CD8-positive, alpha-beta T cell (primary cell): ENCODE measurements at regions of chr2 and their contacts with region 1.

Region 1: DNA sequence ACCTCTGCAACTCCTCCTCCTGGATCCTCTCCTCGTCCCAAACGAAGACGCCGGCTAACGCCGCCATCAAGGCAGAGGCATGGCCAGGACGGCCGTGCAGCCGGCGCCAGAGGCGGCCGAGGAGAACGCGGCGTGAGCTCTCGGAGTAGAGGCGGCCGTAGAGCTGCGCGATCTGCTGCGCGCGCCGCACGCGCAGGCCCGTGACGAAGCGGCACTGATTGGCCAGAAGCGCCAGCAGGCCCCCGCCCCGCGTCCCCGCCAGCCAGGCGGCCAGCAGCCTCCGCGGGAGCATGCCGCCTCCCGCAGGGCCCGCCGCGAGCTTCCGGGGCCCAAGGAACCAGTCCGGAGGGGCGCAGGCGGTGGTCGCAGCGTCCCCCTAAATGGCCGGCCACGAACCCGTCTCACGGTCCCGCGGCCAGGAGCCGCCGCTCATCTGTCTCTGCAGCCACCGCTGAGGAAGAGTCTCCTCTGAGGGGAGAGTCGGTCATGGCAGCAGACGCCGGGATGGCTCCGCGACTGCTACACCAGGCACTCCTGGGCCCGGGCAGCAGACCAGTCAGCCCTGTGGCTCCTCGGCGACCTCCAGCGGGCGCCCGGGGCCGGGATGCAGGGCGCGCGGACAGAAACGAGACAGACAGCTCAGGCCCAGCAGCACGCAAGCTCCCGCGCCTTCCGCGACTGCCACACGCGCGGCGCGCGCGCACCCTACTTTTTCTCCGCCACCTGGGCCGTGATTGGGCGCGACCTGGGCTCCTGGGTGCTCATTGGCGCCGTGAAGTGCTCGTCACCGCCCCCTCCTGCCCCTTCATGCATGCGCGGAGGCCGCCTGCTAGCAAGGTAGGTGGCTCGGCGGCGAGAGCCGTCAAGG is at the start of gene STARD7:
- DNase-seq: peak; percentile 89 to 98 (median 96)
- ATAC-seq: peak; percentile 85
- H3K4me3 ChIP-seq: peak within 1 kb of the TSS; percentile 91
- H3K4me3 Mint-ChIP-seq: peak within 1 kb of the TSS; percentile 100
- H3K27ac ChIP-seq: peak within 1 kb of the TSS; percentile 75
- H3K27ac Mint-ChIP-seq: peak within 1 kb of the TSS; percentile 99
- H3K4me1 ChIP-seq: peaks cover 52% of the 10 kb centered on the region
- H3K4me1 Mint-ChIP-seq: peaks cover 54% of the 10 kb centered on the region
- H3K27me3 ChIP-seq: no peaks in the 10 kb centered on the region
- H3K27me3 Mint-ChIP-seq: no peaks in the 10 kb centered on the region
- CTCF ChIP-seq: no peak
- total RNA-seq, gene STARD7: 75.3 to 85.1 TPM

Region 2: DNA sequence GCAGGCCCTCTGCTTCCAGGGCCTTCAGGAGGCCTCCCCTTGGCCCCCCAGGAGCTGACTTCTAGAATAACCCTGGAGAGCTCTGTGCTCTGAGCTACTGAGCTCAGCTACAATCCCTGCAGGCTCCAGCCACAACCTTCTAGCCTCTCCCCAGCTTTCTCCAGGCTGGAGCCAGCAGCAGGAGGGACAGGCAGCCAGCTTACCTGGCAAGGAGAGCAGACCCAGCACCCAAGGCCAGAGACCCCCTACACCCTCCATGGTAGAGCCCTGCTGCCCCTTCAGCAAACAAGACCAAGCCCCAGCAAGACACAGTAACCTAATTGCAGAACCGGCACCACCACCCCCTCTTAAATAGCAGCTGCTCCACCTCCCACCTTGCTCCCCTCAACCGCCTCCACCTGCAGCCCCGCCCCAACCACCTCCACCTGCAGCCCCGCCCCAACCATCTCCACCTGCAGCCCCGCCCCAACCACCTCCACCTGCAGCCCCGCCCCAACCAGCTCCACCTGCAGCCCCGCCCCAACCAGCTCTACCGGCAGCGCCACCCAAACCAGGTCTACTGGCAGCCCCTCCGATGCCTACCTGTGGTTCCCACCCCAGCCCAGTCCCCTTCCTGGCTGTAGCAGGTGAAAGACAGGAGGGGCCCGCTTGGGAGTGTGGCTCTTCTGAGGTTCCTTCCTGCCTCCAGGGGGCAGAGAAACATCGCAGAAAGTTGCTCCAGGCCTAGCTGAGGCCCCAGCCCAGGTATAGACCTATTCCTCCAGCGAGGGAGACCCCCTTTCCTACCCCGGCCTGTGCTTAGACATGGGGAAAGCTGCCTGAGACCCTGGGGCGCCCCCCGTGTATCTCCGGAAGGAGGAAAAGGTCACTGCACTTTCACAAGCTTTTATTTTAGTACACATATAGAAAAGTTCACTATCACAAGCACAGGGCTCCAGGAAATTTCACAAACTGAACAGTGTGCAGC is 69.9 kb before region 1 on chr2 and contains the start of gene ASTL:
- CTCF ChIA-PET with region 1: interaction called, 11 read pairs
- POLR2A ChIA-PET with region 1: interaction called, 7 read pairs
- intact Hi-C with region 1: no loop called
- DNase-seq: peak; percentile 50 to 86 (median 73)
- ATAC-seq: peak; percentile 30
- H3K4me3 ChIP-seq: no peak within 1 kb of the TSS
- H3K4me3 Mint-ChIP-seq: no peak within 1 kb of the TSS
- H3K27ac ChIP-seq: peak within 1 kb of the TSS in 1 of 2 experiments; percentile 59
- H3K27ac Mint-ChIP-seq: peak within 1 kb of the TSS; percentile 63
- H3K4me1 ChIP-seq: peaks cover 23% of the 10 kb centered on the region
- H3K4me1 Mint-ChIP-seq: peaks cover 31% of the 10 kb centered on the region
- H3K27me3 ChIP-seq: no peaks in the 10 kb centered on the region
- H3K27me3 Mint-ChIP-seq: no peaks in the 10 kb centered on the region
- CTCF ChIP-seq: peak; percentile 52
- total RNA-seq, gene ASTL: 16.6 to 17.5 TPM

Region 3: GRCh38 chr2:96164459-96165184 is 43.8 kb before region 1 on chr2:
- CTCF ChIA-PET with region 1: no interaction called
- POLR2A ChIA-PET with region 1: interaction called, 3 read pairs
- intact Hi-C with region 1: loop called in 1 of 2 experiments (anchors 2 kb)
- DNase-seq: peak in 6 of 9 experiments; percentile 52 to 91 (median 80)
- ATAC-seq: peak; percentile 72
- H3K4me3 ChIP-seq: peak overlapping the region; percentile 25 to 37
- H3K4me3 Mint-ChIP-seq: peak overlapping the region; percentile 78
- H3K27ac ChIP-seq: peak overlapping the region; percentile 63 to 95
- H3K27ac Mint-ChIP-seq: peak overlapping the region; percentile 98
- H3K4me1 ChIP-seq: peaks cover 47% of the 10 kb centered on the region
- H3K4me1 Mint-ChIP-seq: peaks cover 60% of the 10 kb centered on the region
- H3K27me3 ChIP-seq: no peaks in the 10 kb centered on the region
- H3K27me3 Mint-ChIP-seq: no peaks in the 10 kb centered on the region
- CTCF ChIP-seq: no peak

Region 4: DNA sequence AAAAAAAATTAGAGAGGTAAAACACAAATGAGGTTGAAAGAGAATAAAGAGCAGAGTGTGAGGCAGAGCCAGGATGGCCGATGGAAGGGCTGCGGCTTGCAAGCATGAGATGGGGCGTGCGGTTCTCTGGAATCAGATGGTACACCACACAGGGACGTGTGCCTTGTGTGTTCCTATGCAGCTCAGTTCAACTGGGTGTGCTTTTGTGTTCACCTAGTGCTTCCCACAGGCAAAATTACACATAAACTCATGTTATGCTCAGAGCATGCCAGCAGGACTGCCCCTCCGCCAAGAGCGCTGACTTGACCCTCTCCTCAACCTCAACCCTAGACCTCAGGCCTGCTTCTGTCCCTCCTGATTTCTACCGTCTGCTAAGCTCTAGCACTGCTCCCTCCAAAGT is 24.2 kb before region 1 on chr2:
- CTCF ChIA-PET with region 1: no interaction called
- POLR2A ChIA-PET with region 1: no interaction called
- intact Hi-C with region 1: no loop called
- DNase-seq: no peak
- ATAC-seq: no peak
- H3K4me3 ChIP-seq: no peak overlapping the region
- H3K4me3 Mint-ChIP-seq: no peak overlapping the region
- H3K27ac ChIP-seq: no peak overlapping the region
- H3K27ac Mint-ChIP-seq: no peak overlapping the region
- H3K4me1 ChIP-seq: no peaks in the 10 kb centered on the region
- H3K4me1 Mint-ChIP-seq: peaks cover 9% of the 10 kb centered on the region
- H3K27me3 ChIP-seq: no peaks in the 10 kb centered on the region
- H3K27me3 Mint-ChIP-seq: no peaks in the 10 kb centered on the region
- CTCF ChIP-seq: no peak

Region 5: GRCh38 chr2:96260404-96261260 is 52.3 kb after region 1 on chr2:
- CTCF ChIA-PET with region 1: interaction called, 6 read pairs
- POLR2A ChIA-PET with region 1: interaction called, 13 read pairs
- intact Hi-C with region 1: loop called in 1 of 2 experiments (anchors 2 kb)
- DNase-seq: peak in 4 of 9 experiments; percentile 28 to 55 (median 34)
- ATAC-seq: peak; percentile 32
- H3K4me3 ChIP-seq: no peak overlapping the region
- H3K4me3 Mint-ChIP-seq: peak overlapping the region; percentile 42
- H3K27ac ChIP-seq: peak overlapping the region in 1 of 2 experiments; percentile 3
- H3K27ac Mint-ChIP-seq: peak overlapping the region; percentile 77
- H3K4me1 ChIP-seq: peaks cover 77% of the 10 kb centered on the region
- H3K4me1 Mint-ChIP-seq: peaks cover 72% of the 10 kb centered on the region
- H3K27me3 ChIP-seq: no peaks in the 10 kb centered on the region
- H3K27me3 Mint-ChIP-seq: no peaks in the 10 kb centered on the region
- CTCF ChIP-seq: no peak

Region 6: GRCh38 chr2:96320728-96321622 is 112.6 kb after region 1 on chr2:
- CTCF ChIA-PET with region 1: no interaction called
- POLR2A ChIA-PET with region 1: no interaction called
- intact Hi-C with region 1: loop called in 1 of 2 experiments (anchors 5 kb)
- DNase-seq: peak in 2 of 9 experiments; percentile 26 to 38
- ATAC-seq: no peak
- H3K4me3 ChIP-seq: peak overlapping the region; percentile 81 to 85
- H3K4me3 Mint-ChIP-seq: peak overlapping the region; percentile 92
- H3K27ac ChIP-seq: peak overlapping the region; percentile 38 to 71
- H3K27ac Mint-ChIP-seq: peak overlapping the region; percentile 90
- H3K4me1 ChIP-seq: peaks cover 28% of the 10 kb centered on the region
- H3K4me1 Mint-ChIP-seq: peaks cover 55% of the 10 kb centered on the region
- H3K27me3 ChIP-seq: no peaks in the 10 kb centered on the region
- H3K27me3 Mint-ChIP-seq: no peaks in the 10 kb centered on the region
- CTCF ChIP-seq: no peak

Region 7: DNA sequence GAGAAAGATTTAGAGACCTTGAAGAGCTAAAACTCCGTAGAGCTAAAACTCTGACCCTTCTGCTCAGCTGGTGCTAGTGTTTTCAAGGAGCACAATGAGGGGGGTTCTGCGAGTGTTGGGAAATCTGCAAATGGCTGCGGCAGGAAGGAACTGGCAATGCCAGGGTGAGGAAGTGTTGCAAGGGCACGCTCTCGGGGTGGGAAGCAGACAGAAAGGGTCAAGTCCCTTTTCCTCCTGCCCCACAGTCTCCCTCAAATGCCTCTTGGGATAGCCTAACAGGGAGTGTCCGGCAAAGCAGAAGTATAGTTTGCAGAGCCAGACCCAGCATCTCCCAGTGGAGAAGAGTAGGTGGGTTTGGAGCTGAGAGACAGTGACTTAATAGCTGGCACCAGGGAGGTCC is 187.7 kb after region 1 on chr2:
- CTCF ChIA-PET with region 1: no interaction called
- POLR2A ChIA-PET with region 1: no interaction called
- intact Hi-C with region 1: no loop called
- DNase-seq: no peak
- ATAC-seq: no peak
- H3K4me3 ChIP-seq: no peak overlapping the region
- H3K4me3 Mint-ChIP-seq: no peak overlapping the region
- H3K27ac ChIP-seq: no peak overlapping the region
- H3K27ac Mint-ChIP-seq: no peak overlapping the region
- H3K4me1 ChIP-seq: no peaks in the 10 kb centered on the region
- H3K4me1 Mint-ChIP-seq: peaks cover 6% of the 10 kb centered on the region
- H3K27me3 ChIP-seq: no peaks in the 10 kb centered on the region
- H3K27me3 Mint-ChIP-seq: peaks cover 6% of the 10 kb centered on the region
- CTCF ChIP-seq: no peak